ENCODE measurements at regions of chr1 and their contacts with region 1.

Region 1: DNA sequence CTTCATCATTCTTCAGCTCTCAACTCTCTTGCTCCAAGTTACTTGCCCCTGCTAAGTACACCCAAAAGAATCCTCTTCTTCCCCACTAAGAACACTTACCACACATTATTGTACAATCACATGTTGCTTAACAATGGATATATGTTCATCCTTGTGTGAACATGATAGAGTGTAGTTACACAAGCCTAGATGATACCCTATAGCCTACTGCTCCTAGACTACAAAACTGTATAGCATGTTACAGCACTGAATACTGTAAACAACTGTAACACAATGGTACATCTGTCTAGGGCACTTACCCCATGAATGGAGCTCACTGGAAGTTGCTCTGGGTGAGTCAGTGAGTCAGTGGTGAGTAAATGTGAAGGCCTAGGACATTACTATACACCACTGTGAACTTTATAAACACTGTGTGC is 77.4 kb downstream of the RERE start:
- DNase-seq: peak; percentile 24
- H3K27ac ChIP-seq: no peak overlapping the region
- CTCF ChIP-seq: no peak

Region 2: GRCh38 chr1:8497210-8497801 is 242.7 kb before region 1 on chr1:
- CTCF ChIA-PET with region 1: no interaction called
- POLR2A ChIA-PET with region 1: no interaction called
- DNase-seq: peak; percentile 36
- H3K27ac ChIP-seq: no peak overlapping the region
- CTCF ChIP-seq: no peak

Region 3: DNA sequence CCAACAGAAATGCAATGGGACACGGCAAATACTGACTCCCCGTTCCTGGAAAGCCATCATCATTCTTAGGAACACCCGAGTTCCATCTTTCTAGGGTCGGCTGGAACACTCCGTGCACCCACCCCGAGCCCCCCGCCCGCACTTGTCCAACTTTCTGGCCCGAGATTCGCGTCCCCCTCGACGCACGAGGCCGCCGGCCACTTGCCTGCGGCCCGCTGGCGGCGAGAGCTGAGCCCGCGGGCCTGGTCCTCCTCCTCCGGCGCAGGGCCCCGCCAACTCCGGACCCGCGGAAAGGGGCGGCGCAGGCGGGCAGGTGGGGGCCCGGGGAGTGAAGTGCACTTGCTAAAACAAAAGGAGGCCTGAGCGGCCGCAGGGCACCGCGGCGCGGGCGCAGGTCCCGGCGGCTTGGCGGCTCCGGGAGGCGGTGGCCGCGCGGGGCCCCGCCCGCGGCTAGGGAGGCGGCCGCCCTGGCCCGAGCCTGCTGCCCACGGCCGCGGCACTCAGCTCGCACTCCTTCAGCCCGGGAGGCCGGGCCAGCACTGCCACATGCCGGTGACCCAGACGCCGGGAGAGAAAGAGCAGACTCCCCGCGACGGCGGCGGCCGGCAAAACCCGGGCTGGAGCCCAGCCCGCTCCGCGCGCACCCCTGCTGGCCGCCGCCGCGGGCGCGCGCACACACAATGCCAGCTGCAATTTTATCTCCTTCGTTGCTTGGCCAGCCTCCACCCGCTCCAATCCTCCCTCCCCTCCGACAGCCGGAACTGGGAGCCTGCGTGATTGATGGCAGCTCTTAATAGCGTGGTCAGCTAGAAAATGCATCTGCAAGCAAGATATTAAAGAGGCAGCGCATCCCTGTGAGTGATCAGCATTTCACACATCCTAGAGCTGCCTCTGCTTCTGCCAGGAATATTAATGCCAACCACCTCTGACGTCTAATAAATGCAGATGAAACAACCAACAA is 36.9 kb before region 1 on chr1:
- CTCF ChIA-PET with region 1: interaction called, 3 read pairs
- POLR2A ChIA-PET with region 1: interaction called, 15 read pairs
- DNase-seq: peak; percentile 92
- H3K27ac ChIP-seq: peak overlapping the region; percentile 94
- CTCF ChIP-seq: peak; percentile 28

Region 4: DNA sequence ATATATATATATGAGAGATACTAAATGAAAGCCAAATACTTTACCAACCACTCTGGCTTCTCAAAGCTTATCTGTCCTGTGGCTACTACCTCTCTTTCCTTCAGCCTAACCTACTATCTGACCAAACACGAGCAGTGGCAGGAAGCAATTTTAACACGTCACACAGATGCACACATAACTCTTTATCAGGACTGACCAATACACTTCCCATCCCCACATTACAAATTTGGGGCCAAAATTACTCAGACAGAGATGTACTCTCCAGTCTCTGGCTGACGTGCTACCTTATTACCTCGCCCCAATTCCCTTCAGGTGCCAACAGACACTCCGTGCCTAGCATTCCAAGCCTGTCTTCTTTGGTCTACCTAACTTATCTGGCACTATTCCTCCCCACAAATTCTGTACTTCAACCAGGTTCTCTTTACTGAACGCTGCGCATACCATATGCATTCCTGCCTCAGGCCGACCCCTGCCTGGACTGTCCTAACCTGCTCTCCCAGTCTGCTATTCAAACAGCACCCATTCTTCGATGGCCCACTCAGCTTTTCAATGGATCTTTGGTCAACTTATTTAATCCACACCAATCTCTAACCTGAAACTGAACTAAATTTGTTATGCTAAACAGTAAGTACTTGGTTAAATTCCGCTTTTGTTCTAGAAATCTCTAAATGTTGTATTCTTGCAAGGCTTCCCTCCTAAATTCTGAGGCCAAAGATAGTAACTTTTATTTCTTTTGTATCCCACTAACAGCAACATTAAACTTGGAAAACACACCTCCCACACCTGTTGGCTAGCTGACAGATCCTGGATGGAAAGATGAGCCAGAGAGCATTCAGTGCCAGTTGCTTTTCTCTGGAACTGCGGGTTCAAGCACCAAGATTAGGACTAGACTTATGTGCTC is 49.5 kb after region 1 on chr1:
- CTCF ChIA-PET with region 1: no interaction called
- POLR2A ChIA-PET with region 1: interaction called, 16 read pairs
- DNase-seq: peak; percentile 23
- H3K27ac ChIP-seq: no peak overlapping the region
- CTCF ChIP-seq: no peak

Measured in RWPE1 (cell line).